ENCODE measurements at regions of chr1 and their contacts with region 1.

Region 1: GRCh38 chr1:235866913-235867845 is 473 bp upstream of the LYST start:
- DNase-seq: peak; percentile 88 to 98
- H3K4me3 ChIP-seq: peak overlapping the region; percentile 84 to 95
- H3K27ac ChIP-seq: peak overlapping the region; percentile 92 to 93
- H3K4me1 ChIP-seq: peaks cover 0 to 10% of the 10 kb centered on the region in 2 donors
- H3K27me3 ChIP-seq: no peaks in the 10 kb centered on the region
- CTCF ChIP-seq: no peak

Region 2: DNA sequence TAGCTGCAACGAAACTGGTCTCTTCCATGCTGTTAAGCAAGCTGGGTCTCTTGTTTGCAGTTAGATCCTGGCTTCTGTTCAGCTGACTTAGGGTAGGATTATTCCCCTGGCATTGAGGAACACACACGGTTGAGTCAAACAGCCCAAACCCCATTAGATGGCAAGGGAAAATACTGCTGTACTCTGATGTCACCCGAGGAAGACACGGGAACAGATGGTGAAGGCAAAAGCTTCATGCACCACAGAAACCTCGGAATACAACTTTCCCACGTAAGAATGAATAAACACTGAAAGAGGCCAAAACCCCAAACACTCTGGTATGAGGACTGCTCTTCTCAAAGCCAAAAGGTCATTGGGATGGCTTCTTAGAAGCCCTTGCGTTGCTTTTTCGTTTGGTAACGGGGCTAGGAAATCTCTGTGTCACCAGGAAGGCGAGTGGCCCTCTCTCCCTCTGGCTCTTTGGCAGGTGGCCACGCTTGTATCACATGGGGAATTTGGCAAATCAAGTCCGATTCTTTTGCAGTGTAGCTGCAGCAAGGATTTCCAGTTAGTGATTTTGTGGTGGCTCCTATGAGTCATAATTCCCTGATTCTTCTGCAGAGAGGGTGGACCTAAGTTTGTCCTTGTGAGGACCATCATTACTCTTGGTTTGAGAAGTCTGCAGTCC is 16.2 kb after region 1 on chr1:
- intact Hi-C with region 1: loop called (anchors 1 kb)
- DNase-seq: peak; percentile 67 to 95
- H3K4me3 ChIP-seq: peak overlapping the region; percentile 27 to 51
- H3K27ac ChIP-seq: peak overlapping the region; percentile 65 to 73
- H3K4me1 ChIP-seq: peaks cover 0 to 3% of the 10 kb centered on the region in 2 donors
- H3K27me3 ChIP-seq: no peaks in the 10 kb centered on the region
- CTCF ChIP-seq: no peak

Region 3: GRCh38 chr1:235910357-235911299 is 43.4 kb after region 1 on chr1:
- intact Hi-C with region 1: loop called (anchors 1 kb)
- DNase-seq: peak in 1 of 2 donors; percentile 78
- H3K4me3 ChIP-seq: no peak overlapping the region
- H3K27ac ChIP-seq: peak overlapping the region; percentile 82 to 83
- H3K4me1 ChIP-seq: peaks cover 9 to 15% of the 10 kb centered on the region in 2 donors
- H3K27me3 ChIP-seq: no peaks in the 10 kb centered on the region
- CTCF ChIP-seq: no peak

Region 4: DNA sequence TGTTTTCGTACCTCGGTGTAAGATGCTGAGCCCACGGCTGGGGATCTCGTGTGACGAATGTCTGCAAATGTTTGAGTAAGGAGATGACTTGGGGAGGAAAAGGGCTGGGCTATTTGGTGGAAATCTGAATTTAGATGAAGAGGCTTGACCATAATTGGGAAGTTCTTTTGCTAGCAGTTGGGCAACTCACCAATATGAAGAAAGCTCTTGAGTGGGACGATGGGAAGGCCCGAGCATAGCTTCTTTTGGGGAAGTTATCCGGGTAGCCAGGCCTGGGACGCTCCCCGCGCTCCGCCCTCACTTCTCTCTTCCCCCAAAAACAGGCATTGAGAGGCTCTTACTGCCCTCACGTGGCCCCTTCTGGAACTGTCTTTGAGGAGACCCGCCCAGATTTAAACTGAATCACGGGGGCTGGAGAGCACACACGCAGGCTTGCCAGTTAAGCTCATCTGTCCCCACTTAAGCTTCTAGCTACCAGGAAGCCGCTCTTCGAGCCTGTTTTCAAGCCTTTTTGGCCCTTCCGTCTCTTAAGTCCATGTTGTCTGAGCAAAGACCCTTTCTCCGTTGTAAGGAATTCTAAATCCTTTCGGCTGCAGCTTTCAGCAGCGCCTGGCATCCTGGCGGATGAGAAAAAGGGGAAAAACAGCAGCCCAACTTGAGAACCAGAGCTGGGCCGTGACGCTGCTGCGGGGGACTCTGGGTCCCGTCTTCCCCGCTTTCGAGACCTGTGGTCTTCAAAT is 104.6 kb after region 1 on chr1:
- intact Hi-C with region 1: loop called (anchors 1 kb)
- DNase-seq: peak; percentile 83 to 97
- H3K4me3 ChIP-seq: peak overlapping the region; percentile 52 to 66
- H3K27ac ChIP-seq: peak overlapping the region; percentile 95 to 96
- H3K4me1 ChIP-seq: peaks cover 4 to 20% of the 10 kb centered on the region in 2 donors
- H3K27me3 ChIP-seq: no peaks in the 10 kb centered on the region
- CTCF ChIP-seq: peak; percentile 78 to 85 (median 84)

Region 5: GRCh38 chr1:236064674-236065508 is 197.7 kb after region 1 on chr1 and contains the start of gene NID1:
- intact Hi-C with region 1: loop called (anchors 5 kb)
- DNase-seq: peak; percentile 56 to 92
- H3K4me3 ChIP-seq: peak within 1 kb of the TSS; percentile 77 to 81
- H3K27ac ChIP-seq: peak within 1 kb of the TSS; percentile 91 to 95
- H3K4me1 ChIP-seq: peaks cover 0 to 15% of the 10 kb centered on the region in 2 donors
- H3K27me3 ChIP-seq: no peaks in the 10 kb centered on the region
- CTCF ChIP-seq: peak; percentile 35 to 48 (median 38)
- total RNA-seq, gene NID1: 172 TPM